K562 (cell line): ENCODE measurements at regions of chr19 and their contacts with region 1.

Region 1: GRCh38 chr19:42023121-42023942 is 29.3 kb upstream of the ATP1A3 start:
- DNase-seq: peak; percentile 60 to 81 (median 67)
- ATAC-seq: peak; percentile 96
- H3K4me3 ChIP-seq: no peak overlapping the region
- H3K27ac ChIP-seq: no peak overlapping the region
- H3K4me1 ChIP-seq: peaks cover 9 to 19% of the 10 kb centered on the region in 2 experiments
- H3K27me3 ChIP-seq: peaks cover 6 to 25% of the 10 kb centered on the region in 2 experiments; a peak in 4 of 5 replicates
- CTCF ChIP-seq: peak; percentile 92 to 94 (median 94)
- EP300 ChIP-seq: no peak
- POLR2A ChIP-seq: no peak
- RAD21 ChIP-seq: peak; percentile 84 to 95

Region 2: GRCh38 chr19:41974652-41975051 is 48.7 kb before region 1 on chr19:
- CTCF ChIA-PET with region 1: no interaction called
- POLR2A ChIA-PET with region 1: no interaction called
- in situ Hi-C with region 1: no loop called
- intact Hi-C with region 1: no loop called
- DNase-seq: no peak
- ATAC-seq: no peak
- H3K4me3 ChIP-seq: no peak overlapping the region
- H3K27ac ChIP-seq: no peak overlapping the region
- H3K4me1 ChIP-seq: peaks cover 0 to 18% of the 10 kb centered on the region in 2 experiments; a peak in 2 of 5 replicates
- H3K27me3 ChIP-seq: peaks cover 28 to 62% of the 10 kb centered on the region in 2 experiments
- CTCF ChIP-seq: no peak
- EP300 ChIP-seq: no peak
- POLR2A ChIP-seq: no peak
- RAD21 ChIP-seq: no peak

Region 3: GRCh38 chr19:41998246-41999020 is 24.9 kb before region 1 on chr19:
- CTCF ChIA-PET with region 1: interaction called, 3 read pairs
- POLR2A ChIA-PET with region 1: interaction called, 4 read pairs
- in situ Hi-C with region 1: no loop called
- intact Hi-C with region 1: loop called (anchors 1 kb)
- DNase-seq: peak; percentile 74 to 78 (median 77)
- ATAC-seq: peak; percentile 73
- H3K4me3 ChIP-seq: no peak overlapping the region
- H3K27ac ChIP-seq: no peak overlapping the region
- H3K4me1 ChIP-seq: peaks cover 4 to 30% of the 10 kb centered on the region in 2 experiments; a peak in 3 of 5 replicates
- H3K27me3 ChIP-seq: peaks cover 15 to 66% of the 10 kb centered on the region in 2 experiments
- CTCF ChIP-seq: peak; percentile 77 to 90 (median 82)
- EP300 ChIP-seq: no peak
- POLR2A ChIP-seq: no peak
- RAD21 ChIP-seq: peak; percentile 79 to 85

Region 4: DNA sequence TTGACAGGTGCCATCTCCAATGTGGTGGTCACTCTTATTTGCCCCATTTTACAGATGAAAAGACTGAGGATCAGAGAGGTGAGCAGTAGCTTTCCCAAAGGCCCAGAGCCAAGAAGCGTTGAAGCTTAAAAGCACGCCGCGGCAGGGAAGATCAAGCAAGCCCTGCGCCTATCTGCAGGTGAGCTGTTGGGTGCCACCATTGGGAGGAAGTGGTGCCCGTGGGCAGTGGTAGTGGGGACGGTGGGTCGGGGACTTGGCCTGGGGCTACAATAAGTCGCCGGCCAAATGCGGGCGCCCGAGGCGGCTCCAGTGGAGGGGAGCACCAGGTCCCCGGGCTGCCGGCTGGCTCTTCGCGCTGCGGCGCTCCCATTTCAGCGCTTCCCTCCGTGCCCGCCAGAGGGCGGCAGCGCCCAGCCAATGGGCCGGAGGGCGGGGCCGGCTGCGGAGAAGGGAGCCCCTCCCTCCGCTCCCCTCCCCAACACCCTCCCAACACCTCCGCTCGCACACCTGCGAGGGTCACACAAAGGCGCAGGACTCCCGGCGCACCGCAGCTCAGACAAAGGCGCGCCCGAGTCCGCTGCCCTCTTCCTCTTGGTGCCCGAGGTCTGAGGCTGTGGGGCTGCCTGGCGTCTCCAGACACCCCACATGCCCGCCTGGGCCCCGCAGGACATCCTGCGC is 109.7 kb after region 1 on chr19:
- CTCF ChIA-PET with region 1: no interaction called
- POLR2A ChIA-PET with region 1: no interaction called
- in situ Hi-C with region 1: no loop called
- intact Hi-C with region 1: no loop called
- DNase-seq: peak; percentile 77 to 97 (median 93)
- ATAC-seq: peak; percentile 95
- H3K4me3 ChIP-seq: no peak overlapping the region
- H3K27ac ChIP-seq: no peak overlapping the region
- H3K4me1 ChIP-seq: peaks cover 0 to 25% of the 10 kb centered on the region in 2 experiments; a peak in 2 of 5 replicates
- H3K27me3 ChIP-seq: peaks cover 35 to 77% of the 10 kb centered on the region in 2 experiments; a peak in 4 of 5 replicates
- CTCF ChIP-seq: peak; percentile 86 to 96 (median 96)
- EP300 ChIP-seq: no peak
- POLR2A ChIP-seq: no peak
- RAD21 ChIP-seq: peak; percentile 92 to 97